Calu3 (cell line): ENCODE measurements at regions of chr5 and their contacts with region 1.

Region 1: DNA sequence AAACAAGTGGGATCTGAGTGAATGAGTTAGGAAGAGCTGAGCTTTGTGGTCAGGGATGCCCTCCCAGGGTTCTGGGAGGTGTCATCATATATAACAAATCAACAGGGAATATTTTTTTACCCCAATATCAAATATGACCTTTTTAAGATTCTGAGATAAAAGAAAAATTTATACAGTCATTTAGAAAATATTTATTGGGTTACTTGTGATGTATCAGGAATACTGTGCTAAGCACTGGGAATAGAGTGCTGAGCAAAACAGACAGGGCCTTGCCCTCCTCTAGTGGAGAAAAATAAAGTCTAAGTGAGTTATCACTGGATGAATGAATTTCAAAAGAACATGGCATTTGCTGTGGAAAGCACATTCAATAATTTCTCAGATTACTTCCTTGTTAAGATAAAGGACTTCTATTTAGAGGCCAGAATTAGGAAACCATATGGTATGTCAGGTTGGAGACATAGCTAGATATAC is 102.9 kb downstream of the BOD1 start:
- DNase-seq: no peak
- H3K4me3 Mint-ChIP-seq: no peak overlapping the region
- H3K27ac Mint-ChIP-seq: peak overlapping the region; percentile 38
- H3K4me1 Mint-ChIP-seq: peaks cover 22% of the 10 kb centered on the region
- H3K27me3 Mint-ChIP-seq: no peaks in the 10 kb centered on the region
- CTCF ChIP-seq: no peak

Region 2: DNA sequence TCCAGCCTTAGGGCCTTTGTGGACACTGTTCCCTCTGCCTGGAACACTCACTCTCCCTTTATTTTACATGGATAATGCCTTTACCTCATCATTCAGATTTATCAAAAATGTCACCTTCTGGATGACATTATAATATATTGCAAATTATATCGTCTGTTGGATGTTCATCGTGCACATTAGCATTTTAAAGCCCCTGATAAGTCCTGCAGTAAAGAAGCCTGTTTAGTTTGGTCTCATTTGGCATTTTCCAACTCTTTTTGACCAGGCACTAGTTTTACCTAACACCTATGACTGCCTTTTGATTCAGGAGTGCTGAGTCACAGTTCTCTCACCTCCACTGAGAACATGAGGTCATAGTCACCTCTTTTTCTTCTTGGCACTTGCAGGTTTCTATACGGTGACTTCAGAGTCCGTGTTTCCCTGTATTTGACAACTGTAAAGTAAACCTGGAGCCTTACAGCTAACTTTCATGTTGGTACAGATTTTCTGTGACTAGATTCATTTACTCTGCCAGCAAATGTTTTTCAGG is 127.7 kb before region 1 on chr5:
- CTCF ChIA-PET with region 1: no interaction called
- intact Hi-C with region 1: loop called (anchors 5 kb)
- DNase-seq: no peak
- H3K4me3 Mint-ChIP-seq: no peak overlapping the region
- H3K27ac Mint-ChIP-seq: no peak overlapping the region
- H3K4me1 Mint-ChIP-seq: peaks cover 8% of the 10 kb centered on the region
- H3K27me3 Mint-ChIP-seq: no peaks in the 10 kb centered on the region
- CTCF ChIP-seq: no peak

Region 3: GRCh38 chr5:173472141-173472543 is 41.4 kb before region 1 on chr5:
- CTCF ChIA-PET with region 1: no interaction called
- intact Hi-C with region 1: loop called (anchors 5 kb)
- DNase-seq: peak; percentile 66
- H3K4me3 Mint-ChIP-seq: no peak overlapping the region
- H3K27ac Mint-ChIP-seq: peak overlapping the region; percentile 94
- H3K4me1 Mint-ChIP-seq: peaks cover 29% of the 10 kb centered on the region
- H3K27me3 Mint-ChIP-seq: no peaks in the 10 kb centered on the region
- CTCF ChIP-seq: no peak

Region 4: GRCh38 chr5:173643963-173644362 is 130.4 kb after region 1 on chr5:
- CTCF ChIA-PET with region 1: no interaction called
- intact Hi-C with region 1: no loop called
- DNase-seq: peak; percentile 30
- H3K4me3 Mint-ChIP-seq: no peak overlapping the region
- H3K27ac Mint-ChIP-seq: no peak overlapping the region
- H3K4me1 Mint-ChIP-seq: no peaks in the 10 kb centered on the region
- H3K27me3 Mint-ChIP-seq: peaks cover 44% of the 10 kb centered on the region
- CTCF ChIP-seq: no peak